ENCODE measurements at regions of chr2 and their contacts with region 1.

Region 1: GRCh38 chr2:228268756-228269155 is 87.3 kb upstream of the SPHKAP start:
- H3K4me3 ChIP-seq: no peak overlapping the region
- H3K27ac ChIP-seq: no peak overlapping the region
- H3K4me1 ChIP-seq: no peaks in the 10 kb centered on the region
- CTCF ChIP-seq: no peak

Region 2: GRCh38 chr2:228318218-228318617 is 49.5 kb after region 1 on chr2:
- CTCF ChIA-PET with region 1: interaction called, 12 read pairs
- POLR2A ChIA-PET with region 1: no interaction called
- H3K4me3 ChIP-seq: no peak overlapping the region
- H3K27ac ChIP-seq: no peak overlapping the region
- H3K4me1 ChIP-seq: peaks cover 4% of the 10 kb centered on the region; the same call in 1 of the 2 replicates
- CTCF ChIP-seq: no peak